ENCODE measurements at regions of chr15 and their contacts with region 1.

Region 1: GRCh38 chr15:25790000-25790660 is 73.0 kb downstream of the ATP10A start:
- DNase-seq: peak; percentile 90
- ATAC-seq: peak; percentile 60
- H3K4me3 ChIP-seq: peak overlapping the region; percentile 4; the same call in 1 of the 2 replicates
- H3K27ac ChIP-seq: peak overlapping the region; percentile 17
- H3K4me1 ChIP-seq: peaks cover 28% of the 10 kb centered on the region
- H3K27me3 ChIP-seq: no peaks in the 10 kb centered on the region
- CTCF ChIP-seq: no peak
- POLR2A ChIP-seq: no peak; the same call in none of the 2 replicates
- RAD21 ChIP-seq: no peak; the same call in 1 of the 2 replicates

Region 2: DNA sequence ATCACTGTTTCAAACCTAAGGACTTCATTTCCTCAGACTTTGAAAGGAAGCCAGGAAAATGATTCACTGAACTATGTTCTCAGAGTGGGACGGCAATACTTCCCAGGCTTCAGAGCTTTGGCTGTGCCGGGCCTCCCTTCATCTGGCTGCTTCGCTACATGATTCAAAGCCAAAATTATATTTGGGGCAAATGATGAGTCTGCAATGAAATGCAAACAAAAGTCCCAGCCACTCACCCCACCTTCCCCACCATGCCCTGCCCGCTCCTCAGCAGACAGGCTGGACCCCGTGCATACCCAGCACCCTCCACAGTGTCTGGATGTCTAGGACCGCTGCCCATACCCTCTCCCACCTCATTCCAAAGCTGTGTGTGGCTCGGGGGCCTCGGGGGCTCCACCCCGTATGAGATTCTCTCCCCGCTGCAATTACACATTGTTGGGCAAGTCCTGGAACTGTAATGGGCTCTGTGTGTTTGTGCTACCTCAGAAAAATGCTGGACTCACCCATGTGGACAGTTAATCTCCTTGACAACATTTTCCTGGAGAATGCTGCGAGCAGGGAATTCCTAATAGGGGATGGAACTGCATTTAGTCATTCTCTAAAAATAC is 40.8 kb after region 1 on chr15:
- CTCF ChIA-PET with region 1: no interaction called
- POLR2A ChIA-PET with region 1: interaction called, 6 read pairs
- dilution Hi-C with region 1: no loop called
- in situ Hi-C with region 1: no loop called
- intact Hi-C with region 1: loop called (anchors 1 kb)
- DNase-seq: peak; percentile 98
- ATAC-seq: peak; percentile 91
- H3K4me3 ChIP-seq: peak overlapping the region; percentile 22
- H3K27ac ChIP-seq: peak overlapping the region; percentile 64
- H3K4me1 ChIP-seq: peaks cover 21% of the 10 kb centered on the region
- H3K27me3 ChIP-seq: no peaks in the 10 kb centered on the region
- CTCF ChIP-seq: no peak
- POLR2A ChIP-seq: peak; percentile 67; the same call in 1 of the 2 replicates
- RAD21 ChIP-seq: peak; percentile 28

Region 3: DNA sequence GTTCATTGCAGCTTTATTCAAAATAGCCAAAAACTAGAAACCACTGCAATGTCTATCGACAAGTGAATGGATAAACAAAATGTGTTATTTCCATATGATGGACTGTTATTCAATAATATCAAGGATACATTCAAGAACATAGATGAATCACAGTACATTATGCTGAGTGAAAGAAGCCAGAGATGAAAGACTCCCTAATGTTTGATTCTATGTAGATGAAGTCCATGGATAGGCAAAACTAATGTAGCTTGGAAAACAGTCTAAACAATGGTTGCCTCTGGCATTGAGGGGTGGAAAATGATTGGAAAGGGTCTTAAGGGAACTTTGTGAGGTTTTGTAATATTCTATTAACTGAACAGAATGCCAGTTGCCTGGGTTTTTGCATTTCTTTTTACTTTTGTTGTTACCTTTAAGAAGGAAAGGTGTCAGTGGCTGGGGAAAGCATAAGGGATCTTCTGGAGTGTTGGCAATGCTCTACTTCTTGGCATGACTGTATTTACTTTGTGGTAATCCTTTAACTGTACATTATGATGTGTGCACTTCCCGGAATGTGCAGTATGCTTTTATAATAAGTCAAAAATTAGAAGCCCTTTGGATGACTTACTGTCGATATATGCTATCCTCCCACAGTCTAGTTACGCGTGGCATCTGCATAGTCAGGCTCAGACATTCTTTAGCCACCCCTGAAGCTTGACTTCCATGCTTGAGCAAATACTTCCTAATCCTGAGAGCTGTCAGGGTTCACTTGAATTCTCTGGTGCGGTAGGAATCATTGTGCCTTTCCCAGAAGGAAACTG is 93.5 kb after region 1 on chr15:
- CTCF ChIA-PET with region 1: no interaction called
- POLR2A ChIA-PET with region 1: no interaction called
- dilution Hi-C with region 1: no loop called
- in situ Hi-C with region 1: no loop called
- intact Hi-C with region 1: loop called (anchors 5 kb)
- DNase-seq: peak; percentile 95
- ATAC-seq: peak; percentile 92
- H3K4me3 ChIP-seq: no peak overlapping the region
- H3K27ac ChIP-seq: no peak overlapping the region
- H3K4me1 ChIP-seq: peaks cover 23% of the 10 kb centered on the region
- H3K27me3 ChIP-seq: no peaks in the 10 kb centered on the region
- CTCF ChIP-seq: no peak
- POLR2A ChIP-seq: 0 out of 2 replicates have a peak, but pooled peaks have one; percentile 40
- RAD21 ChIP-seq: no peak

Region 4: DNA sequence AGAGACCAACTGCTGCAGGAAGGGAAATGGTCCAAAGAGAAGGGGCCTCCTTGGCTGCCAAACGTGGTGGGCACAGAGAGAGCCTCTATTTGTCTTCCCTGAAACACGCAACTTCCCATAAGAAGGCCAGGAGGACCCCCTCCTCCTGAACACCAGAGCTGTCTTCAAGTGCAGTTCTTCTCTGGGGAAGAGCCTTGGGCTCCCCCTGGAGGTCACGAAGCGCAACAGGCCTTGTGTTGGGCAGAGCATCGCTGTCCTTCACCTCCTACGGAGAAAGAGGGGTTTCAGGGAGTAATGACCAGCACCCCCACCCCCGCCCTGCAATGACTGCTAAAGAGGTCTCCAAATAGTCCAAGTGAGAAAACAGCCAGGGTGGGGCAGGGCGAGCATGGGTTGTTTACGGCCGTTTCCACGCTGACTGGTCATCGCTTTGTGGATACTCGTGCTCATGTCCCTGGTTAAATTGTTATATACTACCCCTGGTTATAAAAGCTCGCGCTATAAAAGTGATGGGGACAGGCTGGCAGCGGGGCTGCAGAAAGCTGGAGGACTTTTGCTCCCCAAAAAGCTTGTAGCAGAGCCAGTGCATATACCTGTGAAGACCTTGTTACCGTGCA is 470.5 kb after region 1 on chr15:
- CTCF ChIA-PET with region 1: no interaction called
- POLR2A ChIA-PET with region 1: no interaction called
- dilution Hi-C with region 1: no loop called
- in situ Hi-C with region 1: no loop called
- intact Hi-C with region 1: no loop called
- DNase-seq: peak; percentile 22
- ATAC-seq: peak; percentile 72
- H3K4me3 ChIP-seq: no peak overlapping the region
- H3K27ac ChIP-seq: no peak overlapping the region
- H3K4me1 ChIP-seq: no peaks in the 10 kb centered on the region
- H3K27me3 ChIP-seq: no peaks in the 10 kb centered on the region
- CTCF ChIP-seq: peak; percentile 61
- POLR2A ChIP-seq: no peak
- RAD21 ChIP-seq: peak; percentile 68